ENCODE measurements at regions of chr2 and their contacts with region 1.

Region 1: DNA sequence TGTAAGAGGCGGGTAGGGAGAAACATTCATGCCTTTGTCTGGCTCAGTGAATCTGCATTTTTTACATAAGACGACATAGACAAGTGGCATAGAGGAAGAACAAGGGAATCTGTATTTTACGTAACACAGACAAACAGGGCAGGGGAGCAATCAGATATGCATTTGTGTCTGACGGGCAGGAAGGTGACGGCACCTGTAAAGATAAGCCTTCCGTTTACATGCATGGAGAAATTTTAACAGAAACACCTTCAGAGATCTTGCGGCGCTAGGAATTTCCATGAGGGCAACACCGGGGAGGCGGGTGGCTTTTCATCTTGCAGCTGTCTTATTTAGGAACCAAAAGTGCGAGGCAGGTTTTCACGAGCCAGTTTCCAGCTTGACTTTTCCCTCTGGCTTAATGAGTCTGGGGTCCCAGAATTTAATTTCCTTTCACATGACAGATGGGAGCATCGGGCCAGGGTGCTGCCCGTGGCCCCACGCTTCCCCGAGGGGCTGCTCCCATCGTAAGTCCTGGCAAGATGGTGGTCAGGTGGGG is 42.6 kb downstream of the RTP5 start:
- DNase-seq: peak in 1 of 2 experiments; percentile 17
- H3K4me3 ChIP-seq: no peak overlapping the region
- H3K27ac ChIP-seq: no peak overlapping the region
- H3K4me1 ChIP-seq: no peaks in the 10 kb centered on the region
- H3K27me3 ChIP-seq: peaks cover 75% of the 10 kb centered on the region
- CTCF ChIP-seq: no peak

Region 2: DNA sequence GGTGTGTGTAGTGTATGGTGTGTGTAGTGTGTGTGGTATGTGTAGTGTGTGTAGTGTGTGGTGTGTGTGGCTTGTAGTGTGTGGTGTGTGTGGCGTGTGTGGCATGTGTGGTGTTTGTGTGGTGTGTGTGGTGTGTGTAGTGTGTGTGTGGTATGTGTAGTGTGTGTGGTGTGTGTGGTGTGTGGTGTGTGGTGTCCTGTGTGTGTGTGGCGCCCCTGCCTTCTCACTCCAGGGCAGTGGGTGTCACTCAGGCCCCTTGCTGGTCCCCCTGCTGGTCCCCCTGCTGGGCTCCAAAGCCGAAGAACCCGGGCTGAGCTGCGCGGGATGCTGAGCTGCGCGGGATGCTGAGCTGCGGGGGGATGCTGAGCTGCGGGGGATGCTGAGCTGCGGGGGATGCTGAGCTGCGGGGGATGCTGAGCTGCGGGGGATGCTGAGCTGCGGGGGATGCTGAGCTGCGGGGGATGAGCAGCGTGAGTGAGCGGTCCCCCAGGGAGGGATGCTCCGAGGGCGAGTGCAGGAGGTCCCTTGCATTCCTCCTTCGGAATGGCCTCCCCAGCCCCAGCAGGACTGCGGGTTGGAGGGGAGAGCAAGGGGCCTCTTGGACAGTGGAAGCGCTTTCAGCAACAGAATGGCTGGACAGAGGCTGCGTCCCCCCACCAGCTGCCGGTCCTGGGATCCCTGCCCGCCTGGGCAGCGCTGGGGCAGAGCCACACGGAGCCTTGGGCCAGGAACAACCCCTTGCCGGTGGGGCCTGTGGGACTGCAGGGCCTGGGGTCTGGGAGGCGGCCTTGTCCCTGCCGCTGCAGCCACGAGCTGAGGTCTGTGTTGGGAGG is 45.9 kb before region 1 on chr2:
- CTCF ChIA-PET with region 1: no interaction called
- POLR2A ChIA-PET with region 1: no interaction called
- intact Hi-C with region 1: no loop called
- DNase-seq: no peak
- H3K4me3 ChIP-seq: no peak overlapping the region
- H3K27ac ChIP-seq: no peak overlapping the region
- H3K4me1 ChIP-seq: no peaks in the 10 kb centered on the region
- H3K27me3 ChIP-seq: peaks cover 55% of the 10 kb centered on the region
- CTCF ChIP-seq: no peak

Region 3: DNA sequence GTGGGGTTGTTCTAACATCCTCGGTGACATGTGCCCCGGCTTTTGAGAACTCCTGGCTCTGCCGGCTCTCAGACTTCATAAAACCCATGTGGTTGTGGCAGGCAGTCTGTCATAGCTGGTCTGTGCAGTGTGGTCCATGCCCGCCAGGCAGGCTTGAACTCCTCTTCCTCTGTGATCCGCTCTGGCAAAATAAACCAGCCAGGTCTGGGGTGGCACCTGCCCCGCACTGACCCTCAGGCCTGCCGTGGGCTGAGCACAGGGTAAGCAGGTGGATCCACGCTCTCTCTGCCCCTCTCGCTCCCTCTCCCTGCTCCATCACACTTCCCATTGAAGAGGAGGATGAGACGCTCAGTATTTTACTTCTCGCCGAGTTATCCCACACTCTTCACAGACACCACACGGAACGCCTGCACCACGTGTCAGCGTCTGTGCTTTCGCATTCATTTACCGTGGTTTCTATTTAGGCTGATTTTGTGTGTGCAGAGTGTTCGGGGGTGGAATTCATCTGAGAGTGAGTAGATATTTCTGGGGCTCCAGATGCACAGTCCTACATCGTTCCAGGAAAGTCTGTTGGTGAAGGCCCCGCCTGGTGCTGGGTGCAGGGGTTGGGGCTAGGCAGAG is 13.8 kb after region 1 on chr2:
- CTCF ChIA-PET with region 1: no interaction called
- POLR2A ChIA-PET with region 1: no interaction called
- intact Hi-C with region 1: loop called (anchors 1 kb)
- DNase-seq: no peak
- H3K4me3 ChIP-seq: no peak overlapping the region
- H3K27ac ChIP-seq: no peak overlapping the region
- H3K4me1 ChIP-seq: no peaks in the 10 kb centered on the region
- H3K27me3 ChIP-seq: peaks cover 50% of the 10 kb centered on the region
- CTCF ChIP-seq: no peak

Measured in PC-9 (cell line).